Transverse colon (tissue), 4 donors: ENCODE measurements at regions of chr1 and their contacts with region 1.

Region 1: GRCh38 chr1:27662707-27663393 is 9.1 kb downstream of the IFI6 start:
- DNase-seq: peak; percentile 89
- H3K4me3 ChIP-seq: no peak overlapping the region
- H3K27ac ChIP-seq: peak overlapping the region; percentile 41 to 62 (median 54)
- H3K4me1 ChIP-seq: peaks cover 0 to 22% (median 11%) of the 10 kb centered on the region in 4 donors
- H3K27me3 ChIP-seq: no peaks in the 10 kb centered on the region
- CTCF ChIP-seq: peak; percentile 87 to 98 (median 90)
- EP300 ChIP-seq: no peak
- POLR2A ChIP-seq: peak; percentile 17

Region 2: DNA sequence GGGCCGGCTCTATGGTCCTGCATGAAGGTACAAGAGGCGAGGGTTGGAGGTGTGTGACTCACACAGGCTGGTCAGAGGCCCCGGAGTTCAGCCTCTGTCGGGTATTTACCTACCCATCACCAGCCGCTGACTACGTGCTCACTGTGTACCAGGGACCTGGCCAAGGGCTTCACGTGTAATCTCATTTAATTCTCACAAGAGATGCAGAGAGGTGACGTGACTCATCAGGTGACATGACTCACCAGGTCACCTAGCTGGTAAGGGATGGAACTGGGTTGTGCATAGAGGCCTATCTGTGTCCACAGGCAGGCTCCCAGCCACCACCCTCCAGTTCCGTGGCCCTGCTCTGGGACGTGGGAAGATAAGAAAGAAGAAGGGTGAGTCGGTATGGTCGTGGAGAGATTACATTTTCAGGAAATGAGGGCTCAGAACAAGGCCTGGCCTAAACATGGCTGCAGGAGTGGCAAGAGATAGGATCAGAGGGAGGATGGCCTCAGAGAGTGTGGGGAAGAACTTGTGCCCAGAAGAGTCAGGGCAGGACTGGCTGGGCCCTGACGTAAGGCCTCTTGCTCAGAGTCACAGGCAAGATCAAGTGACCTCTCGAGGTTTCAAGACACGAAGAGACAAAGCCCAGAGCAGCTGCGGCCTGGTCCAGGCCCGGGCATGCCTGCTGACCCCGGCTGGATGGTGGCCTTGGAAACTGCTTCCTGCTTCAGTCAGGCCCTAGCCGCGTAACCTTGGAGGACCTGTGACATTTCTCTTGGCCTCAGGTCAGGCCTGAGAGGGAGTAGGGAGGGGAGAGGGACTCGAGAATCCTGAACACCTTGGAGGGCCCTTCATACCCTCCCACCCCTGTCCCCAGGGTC is 120.2 kb before region 1 on chr1:
- in situ Hi-C with region 1: no loop called
- intact Hi-C with region 1: no loop called
- DNase-seq: peak; percentile 49
- H3K4me3 ChIP-seq: no peak overlapping the region
- H3K27ac ChIP-seq: peak overlapping the region; percentile 72 to 87 (median 80)
- H3K4me1 ChIP-seq: peaks cover 32 to 64% (median 39%) of the 10 kb centered on the region in 4 donors
- H3K27me3 ChIP-seq: no peaks in the 10 kb centered on the region
- CTCF ChIP-seq: no peak
- EP300 ChIP-seq: no peak
- POLR2A ChIP-seq: no peak

Region 3: GRCh38 chr1:27556781-27557595 is 105.9 kb before region 1 on chr1:
- in situ Hi-C with region 1: loop called in 1 of 4 experiments (anchors 5 kb)
- intact Hi-C with region 1: no loop called
- DNase-seq: peak; percentile 92
- H3K4me3 ChIP-seq: peak overlapping the region in 2 of 4 donors; percentile 10 to 28
- H3K27ac ChIP-seq: peak overlapping the region; percentile 88 to 97 (median 90)
- H3K4me1 ChIP-seq: peaks cover 45 to 60% (median 54%) of the 10 kb centered on the region in 4 donors
- H3K27me3 ChIP-seq: no peaks in the 10 kb centered on the region
- CTCF ChIP-seq: peak; percentile 93 to 98 (median 94)
- EP300 ChIP-seq: no peak
- POLR2A ChIP-seq: no peak

Region 4: DNA sequence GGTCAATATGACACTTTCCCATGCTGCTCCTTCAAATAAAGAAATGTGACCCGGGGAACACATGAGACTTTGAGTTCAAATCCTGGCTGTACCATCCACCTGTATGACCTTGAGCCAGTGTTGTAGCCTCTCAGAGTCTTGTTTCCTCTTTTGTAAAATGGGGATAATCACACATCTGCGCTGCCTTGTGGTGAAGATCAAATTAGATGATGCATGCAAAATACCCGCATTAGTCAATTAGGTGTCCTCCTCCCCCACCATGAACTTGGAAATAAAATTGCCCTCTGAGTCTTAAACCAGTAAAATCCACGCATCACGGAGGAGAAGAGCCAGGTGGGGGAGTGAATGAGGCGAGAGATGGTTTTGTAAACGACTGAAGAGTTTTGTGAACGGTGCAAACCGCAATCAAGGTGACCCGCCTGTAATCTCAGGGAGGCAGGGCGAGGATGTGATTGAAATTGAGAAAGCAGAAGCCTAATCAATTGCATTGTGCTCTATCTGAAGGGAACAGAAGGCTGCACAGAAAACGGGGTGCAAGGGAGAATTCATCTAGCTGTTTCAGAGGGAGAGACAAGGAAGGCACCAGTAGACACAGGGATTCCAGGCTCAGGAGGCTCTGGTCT is 53.1 kb before region 1 on chr1:
- in situ Hi-C with region 1: loop called (anchors 5 to 10 kb)
- intact Hi-C with region 1: loop called (anchors 2 kb)
- DNase-seq: no peak
- H3K4me3 ChIP-seq: no peak overlapping the region
- H3K27ac ChIP-seq: no peak overlapping the region
- H3K4me1 ChIP-seq: peaks cover 0 to 16% (median 5%) of the 10 kb centered on the region in 4 donors
- H3K27me3 ChIP-seq: no peaks in the 10 kb centered on the region
- CTCF ChIP-seq: no peak
- EP300 ChIP-seq: no peak
- POLR2A ChIP-seq: no peak

Region 5: GRCh38 chr1:27616441-27616840 is 46.4 kb before region 1 on chr1:
- in situ Hi-C with region 1: loop called in 1 of 4 experiments (anchors 10 kb)
- intact Hi-C with region 1: loop called (anchors 2 kb)
- DNase-seq: no peak
- H3K4me3 ChIP-seq: no peak overlapping the region
- H3K27ac ChIP-seq: no peak overlapping the region
- H3K4me1 ChIP-seq: peaks cover 0 to 5% (median 0%) of the 10 kb centered on the region in 4 donors
- H3K27me3 ChIP-seq: no peaks in the 10 kb centered on the region
- CTCF ChIP-seq: no peak
- EP300 ChIP-seq: no peak
- POLR2A ChIP-seq: no peak